ENCODE measurements at regions of chr11 and their contacts with region 1.

Region 1: GRCh38 chr11:77187776-77188632 is 60.0 kb downstream of the MYO7A start:
- DNase-seq: peak; percentile 83
- H3K4me3 ChIP-seq: no peak overlapping the region
- H3K27ac ChIP-seq: no peak overlapping the region
- H3K4me1 ChIP-seq: no peaks in the 10 kb centered on the region
- H3K27me3 ChIP-seq: peaks cover 0 to 9% (median 0%) of the 10 kb centered on the region in 3 donors
- CTCF ChIP-seq: peak; percentile 48 to 85 (median 68)
- EP300 ChIP-seq: no peak
- POLR2A ChIP-seq: no peak

Region 2: GRCh38 chr11:76984747-76985146 is 203.3 kb before region 1 on chr11:
- intact Hi-C with region 1: no loop called
- DNase-seq: no peak
- H3K4me3 ChIP-seq: no peak overlapping the region
- H3K27ac ChIP-seq: no peak overlapping the region
- H3K4me1 ChIP-seq: peaks cover 0 to under 1% (median 0%) of the 10 kb centered on the region in 4 donors
- H3K27me3 ChIP-seq: no peaks in the 10 kb centered on the region
- CTCF ChIP-seq: no peak
- EP300 ChIP-seq: no peak
- POLR2A ChIP-seq: no peak

Region 3: GRCh38 chr11:77547863-77548551 is 360.0 kb after region 1 on chr11:
- intact Hi-C with region 1: loop called (anchors 5 kb)
- DNase-seq: no peak
- H3K4me3 ChIP-seq: no peak overlapping the region
- H3K27ac ChIP-seq: no peak overlapping the region
- H3K4me1 ChIP-seq: peaks cover 0 to 9% (median 0%) of the 10 kb centered on the region in 4 donors
- H3K27me3 ChIP-seq: no peaks in the 10 kb centered on the region
- CTCF ChIP-seq: peak in 3 of 4 experiments; percentile 48 to 65 (median 62)
- EP300 ChIP-seq: no peak
- POLR2A ChIP-seq: no peak

Measured in sigmoid colon (tissue), 7 donors.